Caco-2 (cell line): ENCODE measurements at regions of chr9 and their contacts with region 1.

Region 1: DNA sequence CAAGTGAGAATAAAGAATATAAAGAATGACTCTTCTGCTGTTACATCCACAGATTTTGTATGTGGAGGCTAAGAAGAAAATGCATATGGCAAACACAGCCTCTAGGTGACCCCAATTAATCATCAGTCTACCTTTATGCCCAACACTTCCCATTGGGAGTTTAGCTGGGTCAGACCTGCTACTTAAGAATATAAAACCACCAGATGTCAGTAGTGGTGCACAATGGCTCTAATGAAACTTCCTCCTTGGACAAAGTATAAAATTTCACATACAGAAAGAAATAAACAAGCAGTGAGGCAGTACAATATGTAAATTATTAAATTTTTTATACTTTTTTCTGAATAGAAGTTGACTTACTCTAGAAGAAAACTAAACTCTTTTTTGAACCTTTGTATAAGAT is 539.9 kb downstream of the BRINP1 start:
- DNase-seq: no peak
- H3K4me3 ChIP-seq: no peak overlapping the region
- H3K4me3 Mint-ChIP-seq: no peak overlapping the region
- H3K27ac Mint-ChIP-seq: no peak overlapping the region
- H3K4me1 ChIP-seq: no peaks in the 10 kb centered on the region
- H3K4me1 Mint-ChIP-seq: no peaks in the 10 kb centered on the region
- H3K27me3 ChIP-seq: no peaks in the 10 kb centered on the region
- H3K27me3 Mint-ChIP-seq: no peaks in the 10 kb centered on the region
- CTCF ChIP-seq: peak in 1 of 2 experiments; percentile 2

Region 2: DNA sequence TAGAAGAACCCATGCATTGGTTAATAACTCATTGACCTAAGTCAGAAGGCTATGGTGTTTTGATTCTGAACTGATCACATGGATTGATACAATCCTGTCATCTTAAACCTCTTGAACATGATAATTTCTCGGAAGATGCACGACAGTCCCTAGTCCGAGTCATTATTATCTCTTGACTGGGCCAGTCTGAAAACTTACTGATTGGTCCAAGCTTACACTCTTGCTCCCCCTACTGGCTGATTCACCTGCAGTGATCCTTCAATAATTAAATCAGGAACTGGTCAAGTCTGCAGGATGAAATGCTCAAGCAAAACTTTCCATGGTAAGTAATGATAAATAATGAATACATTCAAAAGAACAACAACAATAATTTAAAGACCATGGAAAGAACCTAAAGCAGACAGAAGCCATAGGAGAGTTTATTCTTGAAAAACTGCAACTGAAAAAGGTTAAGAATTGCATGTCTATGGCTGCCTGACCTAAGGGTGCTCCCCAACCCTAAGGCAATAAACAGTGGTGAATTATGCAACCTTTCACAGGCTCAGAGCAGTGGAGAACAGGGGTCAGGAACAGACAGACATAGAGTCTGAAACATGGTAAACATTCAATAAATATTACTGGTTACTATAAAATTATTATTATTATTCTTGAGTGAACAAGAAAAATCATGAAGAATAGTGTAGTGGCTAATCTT is 460.6 kb after region 1 on chr9:
- CTCF ChIA-PET with region 1: no interaction called
- POLR2A ChIA-PET with region 1: no interaction called
- intact Hi-C with region 1: loop called (anchors 2 kb)
- DNase-seq: peak; percentile 46 to 63
- H3K4me3 ChIP-seq: no peak overlapping the region
- H3K4me3 Mint-ChIP-seq: no peak overlapping the region
- H3K27ac Mint-ChIP-seq: no peak overlapping the region
- H3K4me1 ChIP-seq: no peaks in the 10 kb centered on the region
- H3K4me1 Mint-ChIP-seq: no peaks in the 10 kb centered on the region
- H3K27me3 ChIP-seq: no peaks in the 10 kb centered on the region
- H3K27me3 Mint-ChIP-seq: peaks cover 5% of the 10 kb centered on the region
- CTCF ChIP-seq: peak; percentile 57 to 60